HCT116 (cell line): ENCODE measurements at regions of chr3 and their contacts with region 1.

Region 1: GRCh38 chr3:66253790-66254620 is 33.2 kb downstream of the SLC25A26 start:
- DNase-seq: peak; percentile 32
- ATAC-seq: no peak
- H3K4me3 ChIP-seq: no peak overlapping the region
- H3K27ac ChIP-seq: no peak overlapping the region
- H3K4me1 ChIP-seq: no peaks in the 10 kb centered on the region
- H3K27me3 ChIP-seq: no peaks in the 10 kb centered on the region
- CTCF ChIP-seq: peak; percentile 36 to 79 (median 39); a peak in 4 of 6 replicates
- POLR2A ChIP-seq: no peak
- RAD21 ChIP-seq: peak; percentile 57; the same call in 1 of the 2 replicates

Region 2: GRCh38 chr3:66179793-66180192 is 74.2 kb before region 1 on chr3:
- CTCF ChIA-PET with region 1: no interaction called
- POLR2A ChIA-PET with region 1: no interaction called
- RAD21 ChIA-PET with region 1: no interaction called
- intact Hi-C with region 1: no loop called
- DNase-seq: no peak
- ATAC-seq: no peak
- H3K4me3 ChIP-seq: no peak overlapping the region
- H3K27ac ChIP-seq: no peak overlapping the region
- H3K4me1 ChIP-seq: no peaks in the 10 kb centered on the region
- H3K27me3 ChIP-seq: no peaks in the 10 kb centered on the region
- CTCF ChIP-seq: no peak
- POLR2A ChIP-seq: no peak
- RAD21 ChIP-seq: no peak

Region 3: GRCh38 chr3:66822186-66823008 is 568.4 kb after region 1 on chr3:
- CTCF ChIA-PET with region 1: interaction called, 26 read pairs
- POLR2A ChIA-PET with region 1: interaction called, 4 read pairs
- RAD21 ChIA-PET with region 1: no interaction called
- intact Hi-C with region 1: loop called (anchors 1 kb)
- DNase-seq: peak; percentile 64
- ATAC-seq: peak; percentile 99
- H3K4me3 ChIP-seq: no peak overlapping the region
- H3K27ac ChIP-seq: no peak overlapping the region
- H3K4me1 ChIP-seq: no peaks in the 10 kb centered on the region
- H3K27me3 ChIP-seq: peaks cover 22% of the 10 kb centered on the region
- CTCF ChIP-seq: peak; percentile 62 to 90 (median 82); a peak in 5 of 6 replicates
- POLR2A ChIP-seq: no peak
- RAD21 ChIP-seq: peak; percentile 63